K562 (cell line): ENCODE measurements at regions of chr2 and their contacts with region 1.

Region 1: GRCh38 chr2:44044281-44044720 is 48.5 kb upstream of the LRPPRC start:
- DNase-seq: peak; percentile 69 to 87 (median 76)
- ATAC-seq: peak; percentile 100
- H3K4me3 ChIP-seq: no peak overlapping the region
- H3K27ac ChIP-seq: no peak overlapping the region
- H3K4me1 ChIP-seq: peaks cover 0 to 3% of the 10 kb centered on the region in 2 experiments; a peak in 1 of 5 replicates
- H3K27me3 ChIP-seq: peaks cover 2 to 19% of the 10 kb centered on the region in 2 experiments; a peak in 2 of 5 replicates
- CTCF ChIP-seq: peak; percentile 94 to 99 (median 98)
- EP300 ChIP-seq: 0 out of 2 replicates have a peak, but pooled peaks have one; percentile 14
- POLR2A ChIP-seq: no peak
- RAD21 ChIP-seq: peak; percentile 81 to 90

Region 2: DNA sequence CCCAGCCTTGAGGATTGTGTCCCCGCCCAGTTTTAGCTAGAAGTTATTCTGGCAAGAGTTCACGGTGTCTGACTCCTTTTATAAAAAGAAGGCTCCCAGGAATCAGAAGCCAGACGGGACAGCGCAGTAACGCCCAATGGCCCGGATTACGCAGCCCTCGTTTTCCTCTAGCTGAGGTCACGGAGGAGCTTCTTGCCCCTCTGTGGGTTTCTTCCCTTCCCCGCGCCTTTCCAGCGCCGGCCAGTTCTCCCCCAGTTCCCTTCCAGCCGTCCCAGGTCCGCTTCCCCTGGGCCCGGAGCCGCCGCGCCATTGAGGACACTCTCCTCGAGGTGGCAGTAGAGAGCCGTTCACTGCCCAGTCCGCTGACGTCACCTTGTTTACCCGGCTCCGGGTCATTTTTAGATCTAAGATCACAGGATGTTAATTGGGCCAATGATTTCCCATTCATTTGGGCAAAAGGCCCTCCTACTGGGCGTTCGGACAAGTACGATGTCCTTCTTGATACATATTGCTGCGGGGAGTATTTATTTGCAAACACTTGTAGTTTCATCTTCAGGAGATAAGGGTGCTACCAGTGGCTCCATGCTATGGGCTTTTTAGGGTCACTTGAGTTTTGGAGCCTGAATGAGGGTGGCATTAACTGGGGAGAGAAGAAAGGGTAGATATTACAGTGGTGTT is 42.9 kb after region 1 on chr2:
- CTCF ChIA-PET with region 1: no interaction called
- POLR2A ChIA-PET with region 1: no interaction called
- in situ Hi-C with region 1: no loop called
- intact Hi-C with region 1: loop called (anchors 2 kb)
- DNase-seq: peak; percentile 83 to 91 (median 88)
- ATAC-seq: peak; percentile 96
- H3K4me3 ChIP-seq: peak overlapping the region; percentile 28
- H3K27ac ChIP-seq: no peak overlapping the region
- H3K4me1 ChIP-seq: peaks cover 3 to 5% of the 10 kb centered on the region in 2 experiments; a peak in 2 of 5 replicates
- H3K27me3 ChIP-seq: peaks cover 10 to 17% of the 10 kb centered on the region in 2 experiments; a peak in 4 of 5 replicates
- CTCF ChIP-seq: peak; percentile 92 to 95 (median 95)
- EP300 ChIP-seq: no peak
- POLR2A ChIP-seq: no peak
- RAD21 ChIP-seq: peak; percentile 90 to 91

Region 3: GRCh38 chr2:44291281-44292248 is 247.3 kb after region 1 on chr2:
- CTCF ChIA-PET with region 1: interaction called, 4 read pairs
- POLR2A ChIA-PET with region 1: no interaction called
- in situ Hi-C with region 1: no loop called
- intact Hi-C with region 1: loop called (anchors 2 kb)
- DNase-seq: peak in 3 of 4 experiments; percentile 14 to 45 (median 28)
- ATAC-seq: peak; percentile 89
- H3K4me3 ChIP-seq: no peak overlapping the region
- H3K27ac ChIP-seq: no peak overlapping the region
- H3K4me1 ChIP-seq: peaks cover 0 to 2% of the 10 kb centered on the region in 2 experiments; a peak in 1 of 5 replicates
- H3K27me3 ChIP-seq: peaks cover 13 to 37% of the 10 kb centered on the region in 2 experiments
- CTCF ChIP-seq: peak; percentile 49 to 76 (median 66); a peak in 5 of 6 replicates
- EP300 ChIP-seq: no peak
- POLR2A ChIP-seq: no peak
- RAD21 ChIP-seq: peak; percentile 86 to 87

Region 4: GRCh38 chr2:44433881-44434280 is 389.6 kb after region 1 on chr2:
- CTCF ChIA-PET with region 1: no interaction called
- POLR2A ChIA-PET with region 1: no interaction called
- in situ Hi-C with region 1: no loop called
- intact Hi-C with region 1: no loop called
- DNase-seq: no peak
- ATAC-seq: no peak
- H3K4me3 ChIP-seq: no peak overlapping the region
- H3K27ac ChIP-seq: no peak overlapping the region
- H3K4me1 ChIP-seq: no peaks in the 10 kb centered on the region
- H3K27me3 ChIP-seq: no peaks in the 10 kb centered on the region
- CTCF ChIP-seq: no peak
- EP300 ChIP-seq: no peak
- POLR2A ChIP-seq: no peak
- RAD21 ChIP-seq: no peak

Region 5: GRCh38 chr2:44479122-44479887 is 435.0 kb after region 1 on chr2:
- CTCF ChIA-PET with region 1: interaction called, 25 read pairs
- POLR2A ChIA-PET with region 1: no interaction called
- in situ Hi-C with region 1: no loop called
- intact Hi-C with region 1: loop called (anchors 1 kb)
- DNase-seq: peak; percentile 64 to 80 (median 70)
- ATAC-seq: peak; percentile 99
- H3K4me3 ChIP-seq: no peak overlapping the region
- H3K27ac ChIP-seq: no peak overlapping the region
- H3K4me1 ChIP-seq: no peaks in the 10 kb centered on the region
- H3K27me3 ChIP-seq: no peaks in the 10 kb centered on the region
- CTCF ChIP-seq: peak; percentile 100
- EP300 ChIP-seq: 0 out of 2 replicates have a peak, but pooled peaks have one; percentile 15
- POLR2A ChIP-seq: no peak
- RAD21 ChIP-seq: peak; percentile 97 to 98

Region 6: DNA sequence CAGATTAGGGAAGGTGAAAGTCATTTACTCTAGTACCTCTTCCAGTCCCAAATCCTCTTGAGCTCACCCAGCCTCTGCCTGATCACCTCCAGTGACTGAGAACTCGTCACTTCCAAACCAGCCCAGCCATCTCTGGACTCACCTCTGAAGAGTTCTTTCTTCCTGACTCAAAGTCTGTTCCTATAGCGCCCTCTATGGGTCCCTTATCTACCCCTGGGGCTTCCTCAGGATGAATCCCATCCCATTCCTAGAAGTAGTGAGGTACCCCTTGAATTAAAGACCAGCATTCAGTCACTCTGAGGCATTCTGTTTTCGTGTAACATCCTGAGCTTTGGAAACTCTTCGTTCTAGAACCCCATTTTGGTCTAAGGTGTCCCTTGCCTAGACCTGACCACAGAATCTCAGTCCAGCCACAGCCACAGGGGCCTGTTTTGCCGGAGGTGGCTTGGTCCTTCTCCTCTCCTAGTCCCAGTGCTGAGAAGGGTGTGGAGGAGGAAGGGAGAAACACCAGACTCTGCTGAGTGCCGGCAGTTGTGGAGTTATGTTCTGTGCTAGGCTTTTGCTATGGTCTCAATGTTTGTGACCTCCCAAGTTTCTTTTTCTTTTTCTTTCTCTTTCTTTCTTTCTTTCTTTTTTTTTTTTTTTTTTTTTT is 929.9 kb after region 1 on chr2:
- CTCF ChIA-PET with region 1: no interaction called
- POLR2A ChIA-PET with region 1: no interaction called
- in situ Hi-C with region 1: loop called (anchors 10 kb)
- intact Hi-C with region 1: no loop called
- DNase-seq: peak; percentile 59 to 68 (median 60)
- ATAC-seq: peak; percentile 86
- H3K4me3 ChIP-seq: no peak overlapping the region
- H3K27ac ChIP-seq: no peak overlapping the region
- H3K4me1 ChIP-seq: peaks cover 0 to 9% of the 10 kb centered on the region in 2 experiments; a peak in 2 of 5 replicates
- H3K27me3 ChIP-seq: peaks cover 10 to 42% of the 10 kb centered on the region in 2 experiments
- CTCF ChIP-seq: peak; percentile 61 to 79 (median 78); a peak in 5 of 6 replicates
- EP300 ChIP-seq: no peak
- POLR2A ChIP-seq: no peak
- RAD21 ChIP-seq: peak; percentile 32 to 67